ENCODE measurements at regions of chr15 and their contacts with region 1.

Region 1: GRCh38 chr15:101258238-101259144 is 6.6 kb upstream of the CHSY1 start:
- DNase-seq: peak in 7 of 9 donors; percentile 24 to 60 (median 50)
- ATAC-seq: peak; percentile 88
- H3K4me3 ChIP-seq: no peak overlapping the region
- H3K4me3 Mint-ChIP-seq: peak overlapping the region in 1 of 10 donors; percentile 56
- H3K27ac ChIP-seq: no peak overlapping the region
- H3K27ac Mint-ChIP-seq: no peak overlapping the region
- H3K4me1 ChIP-seq: no peaks in the 10 kb centered on the region
- H3K4me1 Mint-ChIP-seq: peaks cover 0 to 26% (median 0%) of the 10 kb centered on the region in 7 donors
- H3K27me3 ChIP-seq: no peaks in the 10 kb centered on the region
- H3K27me3 Mint-ChIP-seq: peaks cover 0 to 20% (median 10%) of the 10 kb centered on the region in 5 donors

Region 2: GRCh38 chr15:100008258-100008657 is 1250.2 kb before region 1 on chr15:
- CTCF ChIA-PET with region 1: no interaction called
- POLR2A ChIA-PET with region 1: no interaction called
- intact Hi-C with region 1: no loop called
- DNase-seq: no peak
- ATAC-seq: no peak
- H3K4me3 ChIP-seq: no peak overlapping the region
- H3K4me3 Mint-ChIP-seq: no peak overlapping the region
- H3K27ac ChIP-seq: no peak overlapping the region
- H3K27ac Mint-ChIP-seq: no peak overlapping the region
- H3K4me1 ChIP-seq: no peaks in the 10 kb centered on the region
- H3K4me1 Mint-ChIP-seq: no peaks in the 10 kb centered on the region
- H3K27me3 ChIP-seq: no peaks in the 10 kb centered on the region
- H3K27me3 Mint-ChIP-seq: peaks cover 0 to 9% (median 0%) of the 10 kb centered on the region in 5 donors

Region 3: GRCh38 chr15:100627789-100628395 is 630.6 kb before region 1 on chr15:
- CTCF ChIA-PET with region 1: no interaction called
- POLR2A ChIA-PET with region 1: no interaction called
- intact Hi-C with region 1: loop called in 1 of 2 experiments (anchors 5 kb)
- DNase-seq: peak; percentile 26 to 73 (median 63)
- ATAC-seq: peak; percentile 95
- H3K4me3 ChIP-seq: no peak overlapping the region
- H3K4me3 Mint-ChIP-seq: no peak overlapping the region
- H3K27ac ChIP-seq: no peak overlapping the region
- H3K27ac Mint-ChIP-seq: peak overlapping the region in 7 of 9 donors; percentile 10 to 57 (median 38)
- H3K4me1 ChIP-seq: no peaks in the 10 kb centered on the region
- H3K4me1 Mint-ChIP-seq: peaks cover 17 to 46% (median 33%) of the 10 kb centered on the region in 7 donors
- H3K27me3 ChIP-seq: no peaks in the 10 kb centered on the region
- H3K27me3 Mint-ChIP-seq: no peaks in the 10 kb centered on the region

Region 4: GRCh38 chr15:100918034-100918689 is 340.3 kb before region 1 on chr15:
- CTCF ChIA-PET with region 1: no interaction called
- POLR2A ChIA-PET with region 1: no interaction called
- intact Hi-C with region 1: loop called (anchors 1 to 10 kb)
- DNase-seq: peak in 8 of 9 donors; percentile 26 to 81 (median 52)
- ATAC-seq: peak; percentile 89
- H3K4me3 ChIP-seq: peak overlapping the region; percentile 53
- H3K4me3 Mint-ChIP-seq: peak overlapping the region; percentile 73 to 89 (median 84)
- H3K27ac ChIP-seq: no peak overlapping the region
- H3K27ac Mint-ChIP-seq: no peak overlapping the region
- H3K4me1 ChIP-seq: no peaks in the 10 kb centered on the region
- H3K4me1 Mint-ChIP-seq: peaks cover 9 to 29% (median 18%) of the 10 kb centered on the region in 7 donors
- H3K27me3 ChIP-seq: peaks cover 0 to 16% of the 10 kb centered on the region in 2 donors
- H3K27me3 Mint-ChIP-seq: peaks cover 63 to 77% (median 73%) of the 10 kb centered on the region in 5 donors

Region 5: GRCh38 chr15:101014921-101015841 is 243.3 kb before region 1 on chr15:
- CTCF ChIA-PET with region 1: interaction called, 24 read pairs
- POLR2A ChIA-PET with region 1: no interaction called
- intact Hi-C with region 1: loop called (anchors 1 kb)
- DNase-seq: peak; percentile 19 to 77 (median 48)
- ATAC-seq: peak; percentile 53
- H3K4me3 ChIP-seq: no peak overlapping the region
- H3K4me3 Mint-ChIP-seq: no peak overlapping the region
- H3K27ac ChIP-seq: no peak overlapping the region
- H3K27ac Mint-ChIP-seq: no peak overlapping the region
- H3K4me1 ChIP-seq: no peaks in the 10 kb centered on the region
- H3K4me1 Mint-ChIP-seq: peaks cover 0 to 3% (median 0%) of the 10 kb centered on the region in 7 donors
- H3K27me3 ChIP-seq: no peaks in the 10 kb centered on the region
- H3K27me3 Mint-ChIP-seq: peaks cover 0 to 3% (median 0%) of the 10 kb centered on the region in 5 donors

Region 6: GRCh38 chr15:101088788-101089583 is 169.5 kb before region 1 on chr15:
- CTCF ChIA-PET with region 1: interaction called, 60 read pairs
- POLR2A ChIA-PET with region 1: no interaction called
- intact Hi-C with region 1: loop called (anchors 1 kb)
- DNase-seq: peak; percentile 45 to 89 (median 74)
- ATAC-seq: peak; percentile 92
- H3K4me3 ChIP-seq: no peak overlapping the region
- H3K4me3 Mint-ChIP-seq: peak overlapping the region in 2 of 10 donors; percentile 13 to 24
- H3K27ac ChIP-seq: no peak overlapping the region
- H3K27ac Mint-ChIP-seq: peak overlapping the region in 1 of 9 donors; percentile 49
- H3K4me1 ChIP-seq: no peaks in the 10 kb centered on the region
- H3K4me1 Mint-ChIP-seq: peaks cover 0 to 13% (median 0%) of the 10 kb centered on the region in 7 donors
- H3K27me3 ChIP-seq: no peaks in the 10 kb centered on the region
- H3K27me3 Mint-ChIP-seq: peaks cover 0 to 10% (median 4%) of the 10 kb centered on the region in 5 donors

Region 7: GRCh38 chr15:101121511-101122090 is 136.9 kb before region 1 on chr15:
- CTCF ChIA-PET with region 1: no interaction called
- POLR2A ChIA-PET with region 1: interaction called, 4 read pairs
- intact Hi-C with region 1: loop called (anchors 1 kb)
- DNase-seq: peak in 6 of 9 donors; percentile 12 to 50 (median 31)
- ATAC-seq: peak; percentile 79
- H3K4me3 ChIP-seq: no peak overlapping the region
- H3K4me3 Mint-ChIP-seq: peak overlapping the region in 7 of 10 donors; percentile 41 to 85 (median 72)
- H3K27ac ChIP-seq: no peak overlapping the region
- H3K27ac Mint-ChIP-seq: peak overlapping the region in 5 of 9 donors; percentile 46 to 76 (median 66)
- H3K4me1 ChIP-seq: peaks cover 8 to 9% of the 10 kb centered on the region in 2 donors
- H3K4me1 Mint-ChIP-seq: peaks cover 20 to 47% (median 24%) of the 10 kb centered on the region in 7 donors
- H3K27me3 ChIP-seq: no peaks in the 10 kb centered on the region
- H3K27me3 Mint-ChIP-seq: no peaks in the 10 kb centered on the region

Region 8: GRCh38 chr15:101242160-101242998 is 16.1 kb before region 1 on chr15:
- CTCF ChIA-PET with region 1: interaction called, 8 read pairs
- POLR2A ChIA-PET with region 1: no interaction called
- intact Hi-C with region 1: loop called in 1 of 2 experiments (anchors 2 kb)
- DNase-seq: peak in 8 of 9 donors; percentile 54 to 79 (median 74)
- ATAC-seq: peak; percentile 93
- H3K4me3 ChIP-seq: peak overlapping the region; percentile 40
- H3K4me3 Mint-ChIP-seq: peak overlapping the region; percentile 60 to 83 (median 71)
- H3K27ac ChIP-seq: no peak overlapping the region
- H3K27ac Mint-ChIP-seq: peak overlapping the region in 8 of 9 donors; percentile 53 to 89 (median 74)
- H3K4me1 ChIP-seq: peaks cover 63 to 80% of the 10 kb centered on the region in 2 donors
- H3K4me1 Mint-ChIP-seq: peaks cover 56 to 88% (median 85%) of the 10 kb centered on the region in 7 donors
- H3K27me3 ChIP-seq: no peaks in the 10 kb centered on the region
- H3K27me3 Mint-ChIP-seq: no peaks in the 10 kb centered on the region

Region 9: DNA sequence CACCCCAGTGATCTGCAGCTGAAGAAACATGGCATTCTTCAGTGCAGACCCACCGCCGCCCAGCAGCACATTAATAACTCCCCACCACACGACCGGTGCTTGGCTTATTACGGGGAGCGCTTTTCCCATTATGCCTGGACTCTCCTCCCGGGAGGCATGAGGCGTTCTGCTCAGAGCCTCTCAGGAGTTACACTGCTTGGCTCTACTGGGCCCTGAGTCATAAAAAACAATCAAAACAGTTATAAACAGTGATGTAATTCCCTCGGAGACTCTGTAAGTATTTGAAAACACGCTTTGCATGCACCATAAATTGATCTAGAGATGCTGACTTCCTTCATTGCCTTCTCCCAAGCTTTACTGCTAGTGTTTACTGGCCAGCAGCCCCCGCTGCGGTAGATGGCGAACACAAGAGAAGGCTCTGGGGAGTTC is 113.7 kb after region 1 on chr15:
- CTCF ChIA-PET with region 1: no interaction called
- POLR2A ChIA-PET with region 1: no interaction called
- intact Hi-C with region 1: no loop called
- DNase-seq: no peak
- ATAC-seq: no peak
- H3K4me3 ChIP-seq: no peak overlapping the region
- H3K4me3 Mint-ChIP-seq: no peak overlapping the region
- H3K27ac ChIP-seq: no peak overlapping the region
- H3K27ac Mint-ChIP-seq: no peak overlapping the region
- H3K4me1 ChIP-seq: no peaks in the 10 kb centered on the region
- H3K4me1 Mint-ChIP-seq: peaks cover 0 to 7% (median 0%) of the 10 kb centered on the region in 7 donors
- H3K27me3 ChIP-seq: no peaks in the 10 kb centered on the region
- H3K27me3 Mint-ChIP-seq: peaks cover 0 to 20% (median 13%) of the 10 kb centered on the region in 5 donors